B cell (primary cell): ENCODE measurements at regions of chr7 and their contacts with region 1.

Region 1: GRCh38 chr7:92621026-92621540 is 30.9 kb upstream of the FAM133B start:
- DNase-seq: peak; percentile 78
- ATAC-seq: peak; percentile 78
- H3K4me3 ChIP-seq: no peak overlapping the region
- H3K4me3 Mint-ChIP-seq: no peak overlapping the region
- H3K27ac ChIP-seq: no peak overlapping the region
- H3K27ac Mint-ChIP-seq: peak overlapping the region; percentile 11
- H3K4me1 ChIP-seq: peaks cover 8 to 9% of the 10 kb centered on the region in 2 donors
- H3K4me1 Mint-ChIP-seq: peaks cover 8% of the 10 kb centered on the region
- H3K27me3 ChIP-seq: no peaks in the 10 kb centered on the region
- H3K27me3 Mint-ChIP-seq: no peaks in the 10 kb centered on the region
- CTCF ChIP-seq: peak; percentile 78

Region 2: DNA sequence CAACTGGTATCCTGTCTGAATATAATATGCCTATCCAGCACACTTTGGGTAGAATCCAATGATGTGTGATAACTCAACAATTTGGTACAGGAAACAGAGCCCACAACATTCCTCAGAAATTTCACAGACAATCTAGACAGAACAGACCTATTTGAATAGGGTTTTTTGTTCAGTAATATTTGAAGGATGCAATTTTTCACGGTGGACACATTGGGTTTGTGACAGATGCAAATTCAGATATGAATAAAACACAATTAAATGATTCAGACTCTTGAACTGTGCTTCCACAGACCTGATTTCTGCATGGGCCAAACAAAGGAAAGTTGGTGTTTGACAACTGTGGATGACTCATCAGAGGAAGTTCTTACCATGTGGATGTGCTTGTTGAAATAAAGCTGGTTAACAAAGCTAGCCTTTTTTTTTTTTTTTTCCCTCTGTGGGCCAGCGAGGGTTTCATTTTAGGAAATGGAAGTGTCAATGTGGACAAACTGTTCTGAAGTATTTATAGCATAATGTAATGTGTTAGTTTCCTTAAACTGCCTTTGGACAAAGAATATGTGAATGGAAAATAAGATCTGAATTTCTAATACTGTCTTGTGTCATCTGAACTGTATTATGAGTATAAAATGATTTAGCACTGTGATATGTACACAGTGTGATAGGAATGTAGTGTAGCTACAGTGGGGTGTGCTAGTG is 12.3 kb after region 1 on chr7:
- CTCF ChIA-PET with region 1: interaction called, 16 read pairs
- POLR2A ChIA-PET with region 1: no interaction called
- intact Hi-C with region 1: no loop called
- DNase-seq: no peak
- ATAC-seq: peak; percentile 49
- H3K4me3 ChIP-seq: no peak overlapping the region
- H3K4me3 Mint-ChIP-seq: no peak overlapping the region
- H3K27ac ChIP-seq: no peak overlapping the region
- H3K27ac Mint-ChIP-seq: no peak overlapping the region
- H3K4me1 ChIP-seq: peaks cover 6 to 7% of the 10 kb centered on the region in 2 donors
- H3K4me1 Mint-ChIP-seq: peaks cover 29% of the 10 kb centered on the region
- H3K27me3 ChIP-seq: no peaks in the 10 kb centered on the region
- H3K27me3 Mint-ChIP-seq: no peaks in the 10 kb centered on the region
- CTCF ChIP-seq: no peak

Region 3: DNA sequence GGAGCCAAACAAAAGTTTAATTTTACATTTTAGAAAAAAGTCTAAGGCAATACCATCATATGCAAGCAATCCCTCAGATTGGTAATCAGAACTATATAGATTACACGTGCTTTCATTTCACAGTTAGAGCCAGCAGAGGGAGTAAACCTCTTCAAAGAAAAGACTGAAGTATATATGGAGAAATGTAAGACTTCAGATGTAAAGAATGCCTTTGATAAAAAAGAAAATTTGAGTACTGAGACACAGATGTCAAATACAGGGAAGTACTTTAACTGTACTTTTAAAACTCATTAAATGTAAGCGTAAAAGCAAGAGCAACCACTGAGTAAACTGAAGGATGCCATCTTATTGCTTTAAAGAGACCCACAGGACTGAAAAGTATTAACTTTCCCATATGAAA is 70.5 kb after region 1 on chr7:
- CTCF ChIA-PET with region 1: interaction called, 5 read pairs
- POLR2A ChIA-PET with region 1: no interaction called
- intact Hi-C with region 1: loop called (anchors 1 kb)
- DNase-seq: peak; percentile 60
- ATAC-seq: peak; percentile 66
- H3K4me3 ChIP-seq: no peak overlapping the region
- H3K4me3 Mint-ChIP-seq: no peak overlapping the region
- H3K27ac ChIP-seq: no peak overlapping the region
- H3K27ac Mint-ChIP-seq: no peak overlapping the region
- H3K4me1 ChIP-seq: no peaks in the 10 kb centered on the region
- H3K4me1 Mint-ChIP-seq: peaks cover 6% of the 10 kb centered on the region
- H3K27me3 ChIP-seq: no peaks in the 10 kb centered on the region
- H3K27me3 Mint-ChIP-seq: no peaks in the 10 kb centered on the region
- CTCF ChIP-seq: peak; percentile 74

Region 4: GRCh38 chr7:92868683-92869293 is 247.7 kb after region 1 on chr7:
- CTCF ChIA-PET with region 1: interaction called, 12 read pairs
- POLR2A ChIA-PET with region 1: no interaction called
- intact Hi-C with region 1: loop called (anchors 1 kb)
- DNase-seq: no peak
- ATAC-seq: no peak
- H3K4me3 ChIP-seq: no peak overlapping the region
- H3K4me3 Mint-ChIP-seq: no peak overlapping the region
- H3K27ac ChIP-seq: no peak overlapping the region
- H3K27ac Mint-ChIP-seq: no peak overlapping the region
- H3K4me1 ChIP-seq: no peaks in the 10 kb centered on the region
- H3K4me1 Mint-ChIP-seq: no peaks in the 10 kb centered on the region
- H3K27me3 ChIP-seq: no peaks in the 10 kb centered on the region
- H3K27me3 Mint-ChIP-seq: peaks cover 2% of the 10 kb centered on the region
- CTCF ChIP-seq: no peak

Region 5: DNA sequence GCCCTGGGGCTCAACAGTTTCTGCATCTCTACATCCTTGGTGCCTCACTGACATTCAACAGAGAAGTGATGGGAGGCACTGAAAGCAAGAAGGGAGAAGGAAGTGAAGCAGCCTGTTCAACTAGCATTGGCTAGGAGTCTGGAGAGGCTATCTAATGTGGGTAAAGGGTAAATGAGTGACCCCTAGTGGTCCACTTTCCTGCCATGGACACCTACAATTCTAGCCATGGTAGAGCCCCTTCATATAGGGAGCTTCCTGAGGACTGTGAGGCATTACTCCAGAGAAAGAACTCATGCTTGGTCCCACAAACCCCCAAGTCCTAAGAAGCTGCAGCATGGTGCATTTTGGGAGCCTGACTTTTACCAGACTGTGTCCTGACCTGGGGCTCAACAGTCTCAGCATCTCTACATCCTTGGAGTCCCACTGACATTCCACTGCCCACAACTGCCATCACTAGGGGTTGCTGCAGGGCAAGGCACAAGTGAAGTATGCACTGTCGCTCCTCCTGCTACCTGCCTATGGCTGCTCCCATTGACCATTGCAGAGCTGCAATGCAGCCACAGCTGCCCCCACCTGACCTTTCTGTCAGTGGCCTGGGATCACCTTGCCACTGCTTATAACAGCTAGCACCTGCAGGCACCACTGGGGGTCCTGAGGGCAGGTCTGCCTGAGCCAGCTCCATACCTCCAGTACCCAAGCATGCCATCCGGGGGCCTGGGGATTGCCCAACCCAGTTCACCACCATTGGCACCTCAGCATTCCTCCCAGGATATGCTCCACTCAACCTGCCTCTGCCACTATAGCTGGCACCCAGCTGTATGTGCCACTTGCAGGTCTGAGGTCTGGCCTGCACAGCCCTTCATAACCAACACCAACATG is 259.4 kb after region 1 on chr7:
- CTCF ChIA-PET with region 1: no interaction called
- POLR2A ChIA-PET with region 1: no interaction called
- intact Hi-C with region 1: loop called (anchors 1 kb)
- DNase-seq: peak; percentile 14
- ATAC-seq: peak; percentile 54
- H3K4me3 ChIP-seq: no peak overlapping the region
- H3K4me3 Mint-ChIP-seq: no peak overlapping the region
- H3K27ac ChIP-seq: no peak overlapping the region
- H3K27ac Mint-ChIP-seq: no peak overlapping the region
- H3K4me1 ChIP-seq: no peaks in the 10 kb centered on the region
- H3K4me1 Mint-ChIP-seq: no peaks in the 10 kb centered on the region
- H3K27me3 ChIP-seq: no peaks in the 10 kb centered on the region
- H3K27me3 Mint-ChIP-seq: no peaks in the 10 kb centered on the region
- CTCF ChIP-seq: no peak

Region 6: GRCh38 chr7:93055543-93056107 is 434.5 kb after region 1 on chr7:
- CTCF ChIA-PET with region 1: interaction called, 26 read pairs
- POLR2A ChIA-PET with region 1: no interaction called
- intact Hi-C with region 1: loop called (anchors 1 kb)
- DNase-seq: peak; percentile 58
- ATAC-seq: peak; percentile 56
- H3K4me3 ChIP-seq: no peak overlapping the region
- H3K4me3 Mint-ChIP-seq: no peak overlapping the region
- H3K27ac ChIP-seq: no peak overlapping the region
- H3K27ac Mint-ChIP-seq: no peak overlapping the region
- H3K4me1 ChIP-seq: no peaks in the 10 kb centered on the region
- H3K4me1 Mint-ChIP-seq: peaks cover 5% of the 10 kb centered on the region
- H3K27me3 ChIP-seq: peaks cover 0 to under 1% (median 0%) of the 10 kb centered on the region in 4 experiments
- H3K27me3 Mint-ChIP-seq: peaks cover 1% of the 10 kb centered on the region
- CTCF ChIP-seq: peak; percentile 93